Activated CD4-positive, alpha-beta T cell treated with anti-CD3 and anti-CD28 coated beads for 36 hours (primary cell): ENCODE measurements at regions of chr15 and their contacts with region 1.

Region 1: DNA sequence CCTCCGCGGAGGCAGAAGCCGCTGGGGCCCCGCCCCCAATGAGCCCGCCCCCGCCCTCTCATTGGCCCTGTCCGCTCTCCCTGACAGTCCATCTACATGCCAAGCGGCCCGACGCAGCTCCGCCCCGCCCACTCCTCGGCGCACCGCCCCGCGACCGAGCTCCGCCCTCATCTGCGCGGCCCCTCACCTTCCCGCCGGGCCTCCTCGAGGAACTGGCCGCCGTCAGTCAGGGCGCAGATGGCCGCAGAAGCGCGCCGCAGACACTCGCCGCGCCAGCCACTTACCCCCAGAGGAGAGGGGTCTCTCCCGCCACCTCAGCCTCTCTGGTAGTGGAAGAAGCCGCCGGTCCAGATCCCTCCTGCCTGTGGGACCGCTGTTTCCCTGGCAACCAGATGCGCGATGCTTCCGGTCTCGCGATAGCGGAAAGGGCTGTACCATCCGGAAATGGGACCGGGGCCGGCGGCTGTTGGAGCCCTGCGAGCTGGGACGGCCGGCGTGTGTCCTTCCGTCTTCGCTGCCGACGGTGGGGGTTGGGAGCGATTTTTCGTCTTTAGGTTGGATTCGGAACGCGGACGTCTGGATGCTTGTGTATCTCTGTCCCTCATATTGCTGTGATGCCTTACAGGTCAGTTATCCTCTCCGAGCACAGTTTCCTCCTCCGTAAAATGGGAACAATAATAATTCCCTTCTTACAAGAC is at the start of gene FSIP1:
- DNase-seq: peak; percentile 98
- ATAC-seq: peak; percentile 99
- H3K4me3 Mint-ChIP-seq: peak within 1 kb of the TSS; percentile 74
- H3K27ac Mint-ChIP-seq: peak within 1 kb of the TSS; percentile 84
- H3K4me1 Mint-ChIP-seq: peaks cover 46% of the 10 kb centered on the region
- H3K27me3 Mint-ChIP-seq: no peaks in the 10 kb centered on the region
- total RNA-seq, gene FSIP1: 0.25 to 0.32 TPM

Region 2: DNA sequence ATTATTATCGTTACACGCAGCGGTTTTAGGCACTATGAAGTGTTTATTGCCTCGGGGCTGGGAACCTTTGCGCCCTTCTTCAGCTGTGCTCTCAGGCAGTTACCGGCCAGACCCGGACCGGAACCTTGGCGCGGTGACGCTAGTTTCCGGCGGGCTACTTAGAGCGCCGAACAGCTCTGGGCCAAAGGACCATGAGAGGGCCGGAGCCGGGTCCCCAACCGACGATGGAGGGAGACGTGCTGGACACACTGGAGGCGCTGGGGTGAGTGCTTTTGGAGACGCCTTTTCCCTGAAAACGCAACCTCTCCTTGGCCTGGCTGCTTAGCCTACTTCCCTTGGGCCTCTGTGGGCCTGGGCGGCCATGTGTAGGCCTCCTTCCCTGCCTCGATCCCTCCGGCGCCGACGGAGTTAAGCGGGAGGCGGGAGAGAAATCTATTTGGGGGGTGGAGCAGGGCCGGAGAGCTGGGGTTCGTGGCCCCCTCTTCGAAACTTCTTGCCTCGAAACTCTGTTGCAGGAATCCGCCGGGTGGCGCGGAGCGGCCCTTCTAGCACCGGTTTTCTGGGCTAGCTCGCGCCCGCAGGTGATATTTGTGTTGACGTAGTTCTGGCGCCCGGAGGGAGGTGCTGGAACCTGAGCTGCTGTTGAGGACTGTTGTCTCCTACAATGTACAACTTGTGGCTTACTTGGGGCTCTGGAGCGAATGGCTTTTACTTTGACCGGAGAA is 1328.5 kb before region 1 on chr15 and contains the start of gene FAM98B:
- CTCF ChIA-PET with region 1: no interaction called
- POLR2A ChIA-PET with region 1: no interaction called
- intact Hi-C with region 1: loop called in 1 of 2 experiments (anchors 1 kb)
- DNase-seq: peak; percentile 92
- ATAC-seq: peak; percentile 92
- H3K4me3 Mint-ChIP-seq: peak within 1 kb of the TSS; percentile 78
- H3K27ac Mint-ChIP-seq: peak within 1 kb of the TSS; percentile 93
- H3K4me1 Mint-ChIP-seq: peaks cover 31% of the 10 kb centered on the region
- H3K27me3 Mint-ChIP-seq: no peaks in the 10 kb centered on the region
- total RNA-seq, gene FAM98B: 54.2 to 81.9 TPM

Region 3: DNA sequence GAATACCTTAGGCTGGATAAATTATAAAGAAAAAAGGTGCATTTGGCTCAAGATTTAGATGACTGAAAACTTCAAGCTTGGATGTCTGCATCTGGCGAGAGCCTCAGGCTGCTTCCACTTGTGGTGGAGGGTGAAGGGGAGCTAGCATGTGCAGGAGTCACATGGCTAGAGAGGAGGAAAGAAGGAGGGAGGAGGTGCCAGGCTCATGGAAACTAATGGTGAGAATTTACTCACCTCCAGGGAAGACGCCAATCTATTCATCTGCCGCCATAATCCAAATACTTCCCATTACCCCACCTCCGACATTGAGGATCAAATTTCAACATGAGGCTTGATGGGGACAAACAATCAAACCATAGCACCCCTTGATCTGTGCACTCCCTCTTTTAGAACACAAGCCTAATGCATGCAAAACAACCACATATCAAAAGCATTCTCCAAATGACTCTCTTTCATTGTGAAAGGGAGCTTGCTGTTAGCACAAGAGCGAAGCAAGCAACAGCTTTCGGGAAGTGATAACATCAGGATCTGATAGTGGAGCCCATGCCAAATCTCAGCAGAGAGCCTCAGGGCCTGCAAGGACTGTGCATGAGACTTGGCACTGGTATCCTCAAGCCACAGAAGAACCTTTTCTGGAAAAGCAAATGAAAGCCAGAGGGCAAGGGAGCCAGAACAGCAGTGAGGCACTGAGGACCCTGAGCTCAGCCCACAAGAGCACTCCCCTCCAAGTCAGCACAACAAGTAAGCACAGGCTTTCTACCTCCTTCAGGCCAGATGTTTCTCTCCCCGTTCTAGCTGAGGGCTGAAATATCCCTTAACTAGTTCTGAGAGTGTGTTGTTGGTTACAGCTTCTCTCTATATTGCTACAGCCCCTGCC is 251.9 kb before region 1 on chr15:
- CTCF ChIA-PET with region 1: no interaction called
- POLR2A ChIA-PET with region 1: no interaction called
- intact Hi-C with region 1: no loop called
- DNase-seq: no peak
- ATAC-seq: no peak
- H3K4me3 Mint-ChIP-seq: no peak overlapping the region
- H3K27ac Mint-ChIP-seq: no peak overlapping the region
- H3K4me1 Mint-ChIP-seq: no peaks in the 10 kb centered on the region
- H3K27me3 Mint-ChIP-seq: peaks cover 6% of the 10 kb centered on the region

Region 4: GRCh38 chr15:39860200-39860599 is 77.6 kb after region 1 on chr15:
- CTCF ChIA-PET with region 1: no interaction called
- POLR2A ChIA-PET with region 1: no interaction called
- intact Hi-C with region 1: no loop called
- DNase-seq: no peak
- ATAC-seq: no peak
- H3K4me3 Mint-ChIP-seq: no peak overlapping the region
- H3K27ac Mint-ChIP-seq: no peak overlapping the region
- H3K4me1 Mint-ChIP-seq: no peaks in the 10 kb centered on the region
- H3K27me3 Mint-ChIP-seq: peaks cover 2% of the 10 kb centered on the region

Region 5: DNA sequence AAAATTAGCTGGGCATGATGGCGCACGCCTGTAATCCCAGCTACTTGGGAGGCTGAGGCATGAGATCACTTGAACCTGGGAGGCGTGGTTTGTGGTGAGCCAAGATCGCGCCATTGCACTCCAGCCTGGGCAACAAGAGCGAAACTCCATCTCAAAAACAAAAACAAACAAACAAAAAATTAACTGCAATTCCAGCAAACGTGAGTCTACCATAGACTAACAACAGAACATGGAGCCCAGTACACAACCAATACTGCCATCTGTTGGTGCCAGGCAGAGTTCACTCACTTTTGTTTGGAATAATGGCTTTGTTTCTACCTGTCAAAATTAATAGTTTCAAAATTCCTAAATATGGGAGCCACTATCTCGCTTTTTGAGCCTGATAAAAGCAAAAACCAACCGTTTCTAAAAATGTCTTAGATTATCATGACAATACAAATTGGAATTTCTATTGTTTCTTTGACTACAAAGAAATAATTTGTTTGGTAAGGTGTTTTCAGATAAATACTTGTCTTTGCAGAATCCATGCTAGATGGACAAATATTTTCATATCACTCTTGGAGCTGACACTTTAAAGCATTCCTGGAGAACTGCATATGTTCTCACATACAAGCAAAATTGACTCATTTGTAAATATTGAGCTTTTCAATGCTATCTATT is 92.4 kb after region 1 on chr15:
- CTCF ChIA-PET with region 1: interaction called, 36 read pairs
- POLR2A ChIA-PET with region 1: no interaction called
- intact Hi-C with region 1: loop called (anchors 1 kb)
- DNase-seq: peak; percentile 48
- ATAC-seq: no peak
- H3K4me3 Mint-ChIP-seq: no peak overlapping the region
- H3K27ac Mint-ChIP-seq: no peak overlapping the region
- H3K4me1 Mint-ChIP-seq: peaks cover 10% of the 10 kb centered on the region
- H3K27me3 Mint-ChIP-seq: peaks cover 2% of the 10 kb centered on the region

Region 6: GRCh38 chr15:39976291-39977274 is 194.0 kb after region 1 on chr15:
- CTCF ChIA-PET with region 1: no interaction called
- POLR2A ChIA-PET with region 1: no interaction called
- intact Hi-C with region 1: loop called in 1 of 2 experiments (anchors 2 kb)
- DNase-seq: peak; percentile 39
- ATAC-seq: peak; percentile 55
- H3K4me3 Mint-ChIP-seq: peak overlapping the region; percentile 43
- H3K27ac Mint-ChIP-seq: peak overlapping the region; percentile 75
- H3K4me1 Mint-ChIP-seq: peaks cover 2% of the 10 kb centered on the region
- H3K27me3 Mint-ChIP-seq: no peaks in the 10 kb centered on the region

Region 7: GRCh38 chr15:40160689-40161688 is 378.4 kb after region 1 on chr15 and contains the start of gene BUB1B:
- CTCF ChIA-PET with region 1: interaction called, 4 read pairs
- POLR2A ChIA-PET with region 1: no interaction called
- intact Hi-C with region 1: loop called (anchors 1 kb)
- DNase-seq: peak; percentile 96
- ATAC-seq: peak; percentile 95
- H3K4me3 Mint-ChIP-seq: no peak within 1 kb of the TSS
- H3K27ac Mint-ChIP-seq: no peak within 1 kb of the TSS
- H3K4me1 Mint-ChIP-seq: peaks cover 8% of the 10 kb centered on the region
- H3K27me3 Mint-ChIP-seq: no peaks in the 10 kb centered on the region
- total RNA-seq, gene BUB1B: 95.3 to 99.5 TPM

Region 8: DNA sequence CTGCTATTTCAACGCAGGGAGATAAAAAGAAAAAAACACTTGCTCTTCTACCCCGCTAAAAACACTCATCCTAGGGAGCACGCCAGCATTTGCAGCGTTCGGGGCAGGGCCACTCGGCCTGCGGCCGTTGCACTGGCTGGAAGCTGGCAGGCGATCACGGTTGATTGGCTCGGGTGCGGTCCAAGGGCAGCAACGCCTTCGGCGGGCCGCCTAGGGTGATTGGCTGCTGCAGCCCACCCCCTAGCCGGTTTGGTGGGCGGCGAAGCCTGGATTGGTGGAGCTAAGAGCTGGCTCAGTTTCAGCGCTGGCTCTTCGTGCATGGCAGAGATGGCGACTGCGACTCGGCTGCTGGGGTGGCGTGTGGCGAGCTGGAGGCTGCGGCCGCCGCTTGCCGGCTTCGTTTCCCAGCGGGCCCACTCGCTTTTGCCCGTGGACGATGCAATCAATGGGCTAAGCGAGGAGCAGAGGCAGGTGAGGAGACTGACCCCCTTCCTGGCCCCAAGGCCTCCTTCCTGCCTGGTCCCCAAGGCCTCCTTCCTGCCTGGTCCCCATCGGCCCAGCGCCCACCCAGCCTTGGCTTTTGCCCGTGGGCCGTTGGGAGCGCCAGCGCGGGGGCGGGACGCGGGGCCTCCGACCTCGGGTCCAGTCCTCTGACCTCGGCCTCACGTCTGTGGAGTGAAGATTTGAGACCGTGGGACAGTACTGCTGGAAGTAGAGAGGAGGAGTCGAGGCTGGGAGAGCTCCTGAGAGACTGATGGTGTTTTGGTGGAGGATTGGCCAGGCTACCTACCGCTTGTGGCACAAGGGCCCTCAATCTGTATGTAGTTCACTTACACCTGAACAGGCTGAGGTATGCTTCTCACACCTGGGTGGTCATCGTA is 623.2 kb after region 1 on chr15 and contains the start of gene IVD:
- CTCF ChIA-PET with region 1: no interaction called
- POLR2A ChIA-PET with region 1: interaction called, 3 read pairs
- intact Hi-C with region 1: loop called in 1 of 2 experiments (anchors 10 kb)
- DNase-seq: peak; percentile 95
- ATAC-seq: peak; percentile 97
- H3K4me3 Mint-ChIP-seq: peak within 1 kb of the TSS; percentile 78
- H3K27ac Mint-ChIP-seq: peak within 1 kb of the TSS; percentile 95
- H3K4me1 Mint-ChIP-seq: peaks cover 52% of the 10 kb centered on the region
- H3K27me3 Mint-ChIP-seq: no peaks in the 10 kb centered on the region
- total RNA-seq, gene IVD: 30.8 to 46.2 TPM